Activated B cell treated with CpG ODN at 0.5 μM for 24 hours (primary cell): ENCODE measurements at regions of chrX and their contacts with region 1.

Region 1: DNA sequence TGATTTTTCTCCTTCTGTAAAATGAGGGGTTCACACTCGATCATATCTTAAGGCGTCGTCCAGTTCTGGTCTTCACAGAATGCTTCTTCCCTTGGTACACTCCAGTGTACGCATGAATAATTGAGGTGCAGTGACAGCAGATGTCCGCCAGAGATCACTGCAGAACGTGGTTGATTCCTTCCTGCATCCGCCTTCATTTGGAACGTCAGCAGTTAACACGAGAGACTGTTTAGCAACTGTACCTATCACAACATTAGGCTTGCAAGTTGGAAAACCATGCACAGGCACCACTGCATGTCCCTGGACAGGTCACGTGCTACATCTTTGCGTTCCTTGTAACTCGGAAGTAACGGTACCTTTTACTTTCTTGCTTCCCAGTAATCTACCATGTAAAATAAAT is 66.0 kb upstream of the GEMIN8 start:
- DNase-seq: peak; percentile 11
- ATAC-seq: peak; percentile 68
- H3K4me3 Mint-ChIP-seq: no peak overlapping the region
- H3K27ac Mint-ChIP-seq: no peak overlapping the region
- H3K4me1 Mint-ChIP-seq: no peaks in the 10 kb centered on the region
- H3K27me3 Mint-ChIP-seq: no peaks in the 10 kb centered on the region
- CTCF ChIP-seq: no peak

Region 2: DNA sequence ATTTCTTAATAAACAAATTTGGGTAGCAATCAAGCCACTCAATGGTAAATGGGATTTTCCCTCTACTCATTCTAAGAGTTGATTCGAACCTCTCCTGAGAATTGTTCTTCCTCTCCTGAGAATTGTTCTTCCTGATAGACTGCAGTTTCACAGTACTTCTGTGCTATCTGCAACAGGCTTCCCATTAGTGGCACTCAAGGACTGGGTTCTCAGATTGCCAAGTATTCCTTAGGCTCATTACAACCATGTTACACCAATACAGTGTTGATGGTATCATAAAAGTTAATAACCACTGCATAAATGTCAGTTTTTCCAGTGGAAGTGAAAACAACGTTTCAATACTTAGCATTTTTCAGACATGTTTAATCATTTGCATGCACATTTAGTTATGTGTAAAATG is 1755.8 kb before region 1 on chrX:
- CTCF ChIA-PET with region 1: no interaction called
- POLR2A ChIA-PET with region 1: no interaction called
- intact Hi-C with region 1: no loop called
- DNase-seq: no peak
- ATAC-seq: peak; percentile 28
- H3K4me3 Mint-ChIP-seq: no peak overlapping the region
- H3K27ac Mint-ChIP-seq: no peak overlapping the region
- H3K4me1 Mint-ChIP-seq: no peaks in the 10 kb centered on the region
- H3K27me3 Mint-ChIP-seq: peaks cover 4% of the 10 kb centered on the region
- CTCF ChIP-seq: no peak

Region 3: GRCh38 chrX:14084466-14084865 is 11.2 kb before region 1 on chrX:
- CTCF ChIA-PET with region 1: no interaction called
- POLR2A ChIA-PET with region 1: no interaction called
- intact Hi-C with region 1: no loop called
- DNase-seq: no peak
- ATAC-seq: no peak
- H3K4me3 Mint-ChIP-seq: no peak overlapping the region
- H3K27ac Mint-ChIP-seq: no peak overlapping the region
- H3K4me1 Mint-ChIP-seq: no peaks in the 10 kb centered on the region
- H3K27me3 Mint-ChIP-seq: peaks cover 2% of the 10 kb centered on the region
- CTCF ChIP-seq: no peak

Region 4: GRCh38 chrX:14528629-14529289 is 433.1 kb after region 1 on chrX:
- CTCF ChIA-PET with region 1: no interaction called
- POLR2A ChIA-PET with region 1: no interaction called
- intact Hi-C with region 1: loop called (anchors 5 kb)
- DNase-seq: no peak
- ATAC-seq: no peak
- H3K4me3 Mint-ChIP-seq: no peak overlapping the region
- H3K27ac Mint-ChIP-seq: no peak overlapping the region
- H3K4me1 Mint-ChIP-seq: peaks cover 2% of the 10 kb centered on the region
- H3K27me3 Mint-ChIP-seq: peaks cover 4% of the 10 kb centered on the region
- CTCF ChIP-seq: no peak

Region 5: DNA sequence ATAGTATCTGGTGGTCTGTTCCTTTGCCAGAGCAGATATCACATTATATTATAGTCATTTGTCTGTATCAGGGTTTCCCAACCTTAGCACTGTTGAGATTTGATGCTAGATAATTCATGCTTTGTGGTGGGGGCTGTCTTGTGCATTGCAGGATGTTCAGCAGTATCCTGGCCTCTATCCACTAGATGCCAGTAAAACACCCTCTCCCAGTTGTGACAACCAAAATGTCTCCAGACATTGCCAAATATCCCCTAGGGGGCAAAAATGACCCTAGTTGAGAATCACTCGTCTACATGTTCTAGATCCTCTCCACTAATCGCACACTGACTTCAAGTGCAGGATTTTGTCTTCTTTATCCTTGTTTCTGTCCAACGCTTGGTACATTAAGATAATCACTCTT is 616.4 kb after region 1 on chrX:
- CTCF ChIA-PET with region 1: interaction called, 4 read pairs
- POLR2A ChIA-PET with region 1: no interaction called
- intact Hi-C with region 1: loop called (anchors 1 kb)
- DNase-seq: no peak
- ATAC-seq: no peak
- H3K4me3 Mint-ChIP-seq: no peak overlapping the region
- H3K27ac Mint-ChIP-seq: no peak overlapping the region
- H3K4me1 Mint-ChIP-seq: no peaks in the 10 kb centered on the region
- H3K27me3 Mint-ChIP-seq: no peaks in the 10 kb centered on the region
- CTCF ChIP-seq: no peak

Region 6: DNA sequence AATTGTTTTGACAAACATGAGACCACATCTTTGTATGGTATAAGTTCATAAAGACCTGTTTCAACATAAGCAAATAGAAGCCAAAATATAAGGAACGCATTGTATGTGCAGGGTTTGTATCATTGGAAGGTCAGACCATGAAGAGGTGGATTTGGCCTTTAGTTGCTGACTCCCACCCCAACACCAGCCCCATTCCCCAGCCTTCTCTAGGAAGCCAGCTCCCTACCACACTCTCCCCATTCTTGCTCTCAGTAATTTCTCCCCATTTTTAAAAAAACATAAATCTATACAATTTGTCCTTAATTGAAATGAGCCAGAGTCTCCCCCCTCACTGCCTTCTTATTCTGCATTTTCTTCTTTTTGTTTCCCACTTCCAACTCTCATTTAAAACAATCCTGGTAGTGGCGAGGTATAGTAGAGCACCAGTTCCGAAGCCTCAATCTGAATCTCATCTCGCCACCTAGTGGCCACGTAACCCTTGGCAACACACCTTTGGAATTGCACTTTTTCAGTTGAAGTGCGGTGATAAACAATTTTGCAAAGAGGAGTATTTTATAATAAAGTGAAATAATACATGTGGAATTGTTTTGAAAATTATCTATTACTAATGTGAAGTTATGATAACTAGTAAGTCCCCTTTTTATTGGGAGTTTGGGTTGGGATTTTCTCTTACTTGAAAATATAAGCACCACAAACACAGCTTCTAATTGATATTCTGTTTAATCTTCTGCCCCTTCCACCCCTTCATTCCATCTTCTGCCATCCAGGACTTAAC is 1047.5 kb after region 1 on chrX:
- CTCF ChIA-PET with region 1: interaction called, 7 read pairs
- POLR2A ChIA-PET with region 1: no interaction called
- intact Hi-C with region 1: loop called (anchors 1 kb)
- DNase-seq: no peak
- ATAC-seq: peak; percentile 60
- H3K4me3 Mint-ChIP-seq: no peak overlapping the region
- H3K27ac Mint-ChIP-seq: no peak overlapping the region
- H3K4me1 Mint-ChIP-seq: peaks cover 2% of the 10 kb centered on the region
- H3K27me3 Mint-ChIP-seq: no peaks in the 10 kb centered on the region
- CTCF ChIP-seq: no peak